ENCODE measurements at regions of chr22 and their contacts with region 1.

Region 1: DNA sequence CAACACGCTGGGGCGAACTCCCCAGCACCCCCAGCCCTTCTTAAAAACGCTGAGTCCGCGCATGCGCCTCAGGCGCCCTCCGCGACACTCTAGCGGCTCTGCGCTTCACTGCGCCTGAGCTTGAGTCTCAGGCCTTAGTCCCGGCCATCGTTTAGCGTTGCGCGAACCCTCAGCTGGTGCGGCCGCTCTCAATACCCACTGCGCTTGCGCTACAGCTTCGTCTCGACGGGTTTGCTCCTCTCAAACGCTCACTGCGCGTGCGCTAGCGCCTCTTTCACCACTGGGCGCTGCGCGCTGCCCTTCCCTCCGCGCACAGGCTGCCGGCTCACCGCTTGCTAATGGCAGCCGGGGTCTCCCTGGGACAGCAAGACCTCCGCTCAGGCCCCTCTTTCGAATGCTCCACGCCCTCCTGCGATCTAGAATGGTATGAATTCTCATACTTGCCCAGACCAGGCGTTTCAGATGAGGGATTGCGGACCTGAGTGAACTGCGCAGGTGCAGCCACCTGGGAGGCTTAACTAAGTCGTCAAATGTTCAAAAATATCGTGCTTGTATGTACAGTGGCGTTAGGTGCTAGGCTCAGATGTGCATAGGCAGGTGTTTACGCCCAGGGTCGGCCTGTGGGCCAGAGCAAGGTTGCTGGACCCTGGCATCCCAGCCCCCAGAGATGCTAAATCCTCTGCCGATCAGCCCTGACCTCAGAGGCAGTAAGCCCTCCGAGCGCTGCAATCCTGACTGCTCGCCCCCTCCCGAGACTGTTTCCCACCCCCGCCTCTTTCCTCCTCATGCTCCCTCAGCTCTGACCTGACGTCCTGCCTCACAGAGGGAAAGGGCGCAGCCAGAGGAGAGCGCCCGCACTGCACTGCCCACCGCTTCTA is at the start of gene SLC2A11:
- DNase-seq: peak; percentile 96
- ATAC-seq: peak; percentile 97
- H3K4me3 ChIP-seq: peak within 1 kb of the TSS; percentile 89
- H3K27ac ChIP-seq: peak within 1 kb of the TSS; percentile 91
- H3K4me1 ChIP-seq: peaks cover 11% of the 10 kb centered on the region
- H3K27me3 ChIP-seq: no peaks in the 10 kb centered on the region
- CTCF ChIP-seq: peak; percentile 17 to 39 (median 26); a peak in 2 of 6 replicates
- EP300 ChIP-seq: no peak
- POLR2A ChIP-seq: peak; percentile 96
- RAD21 ChIP-seq: no peak
- polyA plus RNA-seq, gene SLC2A11: 0.98 to 2.9 TPM

Region 2: GRCh38 chr22:23553924-23554870 is 303.6 kb before region 1 on chr22:
- CTCF ChIA-PET with region 1: no interaction called
- POLR2A ChIA-PET with region 1: no interaction called
- RAD21 ChIA-PET with region 1: no interaction called
- SMC1A ChIA-PET with region 1: no interaction called
- in situ Hi-C with region 1: no loop called
- intact Hi-C with region 1: no loop called
- DNase-seq: no peak
- ATAC-seq: no peak
- H3K4me3 ChIP-seq: no peak overlapping the region
- H3K27ac ChIP-seq: no peak overlapping the region
- H3K4me1 ChIP-seq: no peaks in the 10 kb centered on the region
- H3K27me3 ChIP-seq: no peaks in the 10 kb centered on the region
- CTCF ChIP-seq: no peak
- EP300 ChIP-seq: no peak
- POLR2A ChIP-seq: no peak
- RAD21 ChIP-seq: no peak

Region 3: DNA sequence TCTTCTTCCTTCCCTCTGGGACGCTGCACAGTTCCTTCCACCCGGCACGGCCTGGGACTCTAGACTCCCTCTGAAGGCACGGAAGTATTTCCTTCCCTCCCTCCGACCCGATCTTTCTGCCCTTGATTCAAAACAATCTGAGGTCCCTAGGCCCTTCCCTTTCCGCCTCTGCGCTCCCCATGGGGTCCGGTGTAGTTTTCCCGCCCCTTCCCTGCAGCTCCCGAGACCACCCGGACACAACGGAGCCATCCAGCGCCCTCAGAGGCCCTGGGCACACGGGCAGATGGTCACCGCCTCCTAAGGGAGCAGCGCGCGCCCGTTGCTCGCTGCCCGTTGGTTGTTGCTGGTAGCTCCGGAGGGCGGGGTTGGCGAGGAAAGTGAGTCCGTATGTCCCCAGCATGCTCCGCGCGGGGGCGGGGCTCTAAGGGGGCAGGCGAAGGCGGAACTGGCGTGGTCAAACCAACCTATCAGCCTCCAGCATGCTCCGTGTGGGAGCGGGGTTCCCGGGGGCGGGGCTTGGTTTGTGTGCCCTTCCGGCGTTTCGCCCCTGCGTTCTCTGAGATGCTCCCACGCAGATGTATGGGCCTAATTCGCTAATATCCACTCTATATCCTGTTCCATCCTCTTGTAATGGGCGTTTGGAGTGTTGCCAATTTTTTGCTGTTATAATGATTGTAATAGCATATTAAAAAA is 56.0 kb after region 1 on chr22:
- CTCF ChIA-PET with region 1: interaction called, 4 read pairs
- POLR2A ChIA-PET with region 1: interaction called, 13 read pairs
- RAD21 ChIA-PET with region 1: interaction called, 4 read pairs
- SMC1A ChIA-PET with region 1: interaction called, 5 read pairs
- in situ Hi-C with region 1: no loop called
- intact Hi-C with region 1: no loop called
- DNase-seq: peak; percentile 94
- ATAC-seq: peak; percentile 99
- H3K4me3 ChIP-seq: peak overlapping the region; percentile 73
- H3K27ac ChIP-seq: peak overlapping the region; percentile 99
- H3K4me1 ChIP-seq: peaks cover 2% of the 10 kb centered on the region; the same call in 1 of the 2 replicates
- H3K27me3 ChIP-seq: no peaks in the 10 kb centered on the region
- CTCF ChIP-seq: no peak
- EP300 ChIP-seq: no peak
- POLR2A ChIP-seq: peak; percentile 99
- RAD21 ChIP-seq: no peak

Region 4: GRCh38 chr22:23938328-23939016 is 80.6 kb after region 1 on chr22:
- CTCF ChIA-PET with region 1: no interaction called
- POLR2A ChIA-PET with region 1: no interaction called
- RAD21 ChIA-PET with region 1: no interaction called
- SMC1A ChIA-PET with region 1: no interaction called
- in situ Hi-C with region 1: no loop called
- intact Hi-C with region 1: no loop called
- DNase-seq: no peak
- ATAC-seq: no peak
- H3K4me3 ChIP-seq: no peak overlapping the region
- H3K27ac ChIP-seq: no peak overlapping the region
- H3K4me1 ChIP-seq: no peaks in the 10 kb centered on the region
- H3K27me3 ChIP-seq: no peaks in the 10 kb centered on the region
- CTCF ChIP-seq: no peak
- EP300 ChIP-seq: no peak
- POLR2A ChIP-seq: no peak
- RAD21 ChIP-seq: no peak

Region 5: GRCh38 chr22:24037851-24038765 is 180.3 kb after region 1 on chr22:
- CTCF ChIA-PET with region 1: no interaction called
- POLR2A ChIA-PET with region 1: no interaction called
- RAD21 ChIA-PET with region 1: no interaction called
- SMC1A ChIA-PET with region 1: no interaction called
- in situ Hi-C with region 1: no loop called
- intact Hi-C with region 1: no loop called
- DNase-seq: no peak
- ATAC-seq: no peak
- H3K4me3 ChIP-seq: no peak overlapping the region
- H3K27ac ChIP-seq: no peak overlapping the region
- H3K4me1 ChIP-seq: no peaks in the 10 kb centered on the region
- H3K27me3 ChIP-seq: no peaks in the 10 kb centered on the region
- CTCF ChIP-seq: no peak
- EP300 ChIP-seq: no peak
- POLR2A ChIP-seq: no peak
- RAD21 ChIP-seq: no peak

Measured in GM12878 (cell line).